Panc1 (cell line): ENCODE measurements at regions of chr7 and their contacts with region 1.

Region 1: GRCh38 chr7:20778063-20778721 is 8.5 kb downstream of the SP8 start:
- DNase-seq: no peak
- ATAC-seq: peak; percentile 99
- H3K4me3 ChIP-seq: peak overlapping the region; percentile 14 to 36; a peak in 3 of 4 replicates
- H3K27ac ChIP-seq: no peak overlapping the region
- H3K4me1 ChIP-seq: 0 out of 2 replicates have a peak, but pooled peaks cover 3% of the 10 kb centered on the region
- H3K27me3 ChIP-seq: peaks cover 42% of the 10 kb centered on the region
- CTCF ChIP-seq: peak; percentile 97

Region 2: GRCh38 chr7:21253740-21254687 is 475.8 kb after region 1 on chr7:
- CTCF ChIA-PET with region 1: interaction called, 3 read pairs
- POLR2A ChIA-PET with region 1: no interaction called
- in situ Hi-C with region 1: no loop called
- intact Hi-C with region 1: loop called (anchors 1 kb)
- DNase-seq: peak; percentile 47
- ATAC-seq: peak; percentile 98
- H3K4me3 ChIP-seq: no peak overlapping the region
- H3K27ac ChIP-seq: no peak overlapping the region
- H3K4me1 ChIP-seq: peaks cover 8% of the 10 kb centered on the region; the same call in 1 of the 2 replicates
- H3K27me3 ChIP-seq: peaks cover 43% of the 10 kb centered on the region
- CTCF ChIP-seq: peak; percentile 90

Region 3: GRCh38 chr7:21767300-21767900 is 989.2 kb after region 1 on chr7:
- CTCF ChIA-PET with region 1: no interaction called
- POLR2A ChIA-PET with region 1: no interaction called
- in situ Hi-C with region 1: no loop called
- intact Hi-C with region 1: loop called (anchors 5 kb)
- DNase-seq: peak; percentile 75
- ATAC-seq: peak; percentile 99
- H3K4me3 ChIP-seq: no peak overlapping the region
- H3K27ac ChIP-seq: no peak overlapping the region
- H3K4me1 ChIP-seq: no peaks in the 10 kb centered on the region
- H3K27me3 ChIP-seq: peaks cover 7% of the 10 kb centered on the region
- CTCF ChIP-seq: peak; percentile 93

Region 4: GRCh38 chr7:22025968-22026367 is 1247.8 kb after region 1 on chr7:
- CTCF ChIA-PET with region 1: no interaction called
- POLR2A ChIA-PET with region 1: interaction called, 12 read pairs
- in situ Hi-C with region 1: no loop called
- intact Hi-C with region 1: no loop called
- DNase-seq: no peak
- ATAC-seq: no peak
- H3K4me3 ChIP-seq: no peak overlapping the region
- H3K27ac ChIP-seq: no peak overlapping the region
- H3K4me1 ChIP-seq: no peaks in the 10 kb centered on the region
- H3K27me3 ChIP-seq: peaks cover 10% of the 10 kb centered on the region
- CTCF ChIP-seq: no peak